ENCODE measurements at regions of chr5 and their contacts with region 1.

Region 1: GRCh38 chr5:103258368-103258956 is at the start of gene MACIR:
- DNase-seq: peak; percentile 90 to 98 (median 94)
- ATAC-seq: peak; percentile 91
- H3K4me3 ChIP-seq: peak within 1 kb of the TSS; percentile 82
- H3K4me3 Mint-ChIP-seq: peak within 1 kb of the TSS; percentile 90
- H3K27ac ChIP-seq: peak within 1 kb of the TSS in 1 of 2 donors; percentile 65
- H3K27ac Mint-ChIP-seq: peak within 1 kb of the TSS; percentile 80
- H3K4me1 ChIP-seq: peaks cover 9% of the 10 kb centered on the region
- H3K4me1 Mint-ChIP-seq: peaks cover 27% of the 10 kb centered on the region
- H3K27me3 ChIP-seq: peaks cover 5 to 7% of the 10 kb centered on the region in 2 experiments
- H3K27me3 Mint-ChIP-seq: peaks cover 4% of the 10 kb centered on the region
- CTCF ChIP-seq: no peak
- total RNA-seq, gene MACIR: 1.3 to 1.6 TPM

Region 2: GRCh38 chr5:102754767-102755431 is 503.6 kb before region 1 on chr5 and contains the start of gene PAM:
- CTCF ChIA-PET with region 1: no interaction called
- POLR2A ChIA-PET with region 1: interaction called, 10 read pairs
- intact Hi-C with region 1: loop called in 1 of 2 experiments (anchors 10 kb)
- DNase-seq: peak; percentile 42 to 85 (median 63)
- ATAC-seq: peak; percentile 70
- H3K4me3 ChIP-seq: peak within 1 kb of the TSS; percentile 96
- H3K4me3 Mint-ChIP-seq: peak within 1 kb of the TSS; percentile 96
- H3K27ac ChIP-seq: peak within 1 kb of the TSS; percentile 43 to 69
- H3K27ac Mint-ChIP-seq: peak within 1 kb of the TSS; percentile 79
- H3K4me1 ChIP-seq: peaks cover 22% of the 10 kb centered on the region
- H3K4me1 Mint-ChIP-seq: peaks cover 45% of the 10 kb centered on the region
- H3K27me3 ChIP-seq: no peaks in the 10 kb centered on the region
- H3K27me3 Mint-ChIP-seq: peaks cover 12% of the 10 kb centered on the region
- CTCF ChIP-seq: no peak
- total RNA-seq, gene PAM: 15.1 to 16.1 TPM

Region 3: GRCh38 chr5:103111468-103111867 is 147.0 kb before region 1 on chr5:
- CTCF ChIA-PET with region 1: no interaction called
- POLR2A ChIA-PET with region 1: interaction called, 16 read pairs
- intact Hi-C with region 1: no loop called
- DNase-seq: peak in 4 of 14 experiments; percentile 11 to 87 (median 54)
- ATAC-seq: peak; percentile 94
- H3K4me3 ChIP-seq: no peak overlapping the region
- H3K4me3 Mint-ChIP-seq: peak overlapping the region; percentile 74
- H3K27ac ChIP-seq: peak overlapping the region in 1 of 2 donors; percentile 47
- H3K27ac Mint-ChIP-seq: peak overlapping the region; percentile 93
- H3K4me1 ChIP-seq: peaks cover 7% of the 10 kb centered on the region
- H3K4me1 Mint-ChIP-seq: peaks cover 57% of the 10 kb centered on the region
- H3K27me3 ChIP-seq: no peaks in the 10 kb centered on the region
- H3K27me3 Mint-ChIP-seq: no peaks in the 10 kb centered on the region
- CTCF ChIP-seq: no peak

Region 4: DNA sequence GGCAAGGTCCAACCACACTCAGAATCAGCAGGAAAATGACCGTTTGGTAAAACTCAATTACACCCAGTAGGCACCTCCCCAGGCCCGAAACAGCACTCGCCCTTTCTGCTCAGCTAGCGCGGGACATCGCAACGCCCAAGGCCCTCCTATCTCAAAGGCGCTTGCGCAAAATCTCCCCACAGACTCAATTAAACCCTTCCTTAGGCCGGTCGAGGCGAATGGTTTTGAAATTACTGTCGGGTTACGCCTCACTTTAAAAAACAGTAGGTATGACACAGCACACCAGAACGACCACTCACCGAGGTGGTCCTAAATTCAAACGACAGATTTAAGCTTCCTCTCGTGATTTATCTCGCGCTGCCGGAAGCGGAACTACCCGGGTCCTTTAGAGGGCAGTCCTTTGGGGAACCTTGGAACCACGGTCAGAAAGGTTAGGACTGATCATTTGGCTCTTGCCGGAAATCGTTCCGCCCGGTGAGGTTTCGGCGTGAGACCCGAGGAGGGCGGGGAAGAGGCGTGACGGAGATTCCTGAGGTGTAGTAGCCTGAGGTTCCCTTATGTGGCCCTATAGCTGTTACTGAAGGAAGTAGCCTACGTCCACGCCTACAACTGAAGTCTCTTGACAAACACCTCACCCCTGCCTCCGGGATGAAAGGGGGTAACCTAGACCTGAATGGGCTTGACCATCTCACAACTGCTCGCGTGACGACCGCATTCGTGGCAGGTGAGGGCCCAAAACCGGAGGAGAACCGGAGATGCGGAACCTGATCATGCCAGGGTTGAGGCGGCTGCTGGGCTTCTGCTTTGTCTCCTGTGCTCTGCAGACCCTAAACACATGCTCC is 138.5 kb before region 1 on chr5 and contains the starts of genes GIN1 and PPIP5K2:
- CTCF ChIA-PET with region 1: no interaction called
- POLR2A ChIA-PET with region 1: interaction called, 46 read pairs
- intact Hi-C with region 1: loop called (anchors 2 to 5 kb)
- DNase-seq: peak; percentile 93 to 99 (median 97)
- ATAC-seq: peak; percentile 90
- H3K4me3 ChIP-seq: peak within 1 kb of the TSS; percentile 86
- H3K4me3 Mint-ChIP-seq: peak within 1 kb of the TSS; percentile 98
- H3K27ac ChIP-seq: peak within 1 kb of the TSS; percentile 92 to 98
- H3K27ac Mint-ChIP-seq: peak within 1 kb of the TSS; percentile 97
- H3K4me1 ChIP-seq: peaks cover 13% of the 10 kb centered on the region
- H3K4me1 Mint-ChIP-seq: peaks cover 65% of the 10 kb centered on the region
- H3K27me3 ChIP-seq: no peaks in the 10 kb centered on the region
- H3K27me3 Mint-ChIP-seq: no peaks in the 10 kb centered on the region
- CTCF ChIP-seq: no peak
- total RNA-seq, gene GIN1: 2.7 to 2.9 TPM
- total RNA-seq, gene PPIP5K2: 40.4 to 45.6 TPM

Region 5: GRCh38 chr5:103275851-103276250 is 17.4 kb after region 1 on chr5:
- CTCF ChIA-PET with region 1: no interaction called
- POLR2A ChIA-PET with region 1: interaction called, 12 read pairs
- intact Hi-C with region 1: no loop called
- DNase-seq: no peak
- ATAC-seq: no peak
- H3K4me3 ChIP-seq: no peak overlapping the region
- H3K4me3 Mint-ChIP-seq: no peak overlapping the region
- H3K27ac ChIP-seq: no peak overlapping the region
- H3K27ac Mint-ChIP-seq: no peak overlapping the region
- H3K4me1 ChIP-seq: no peaks in the 10 kb centered on the region
- H3K4me1 Mint-ChIP-seq: peaks cover 10% of the 10 kb centered on the region
- H3K27me3 ChIP-seq: no peaks in the 10 kb centered on the region
- H3K27me3 Mint-ChIP-seq: no peaks in the 10 kb centered on the region
- CTCF ChIP-seq: no peak

Region 6: GRCh38 chr5:103562453-103563157 is 304.1 kb after region 1 on chr5 and contains the start of gene NUDT12:
- CTCF ChIA-PET with region 1: no interaction called
- POLR2A ChIA-PET with region 1: no interaction called
- intact Hi-C with region 1: loop called in 1 of 2 experiments (anchors 10 kb)
- DNase-seq: peak in 13 of 14 experiments; percentile 4 to 64 (median 25)
- ATAC-seq: peak; percentile 70
- H3K4me3 ChIP-seq: peak within 1 kb of the TSS; percentile 62
- H3K4me3 Mint-ChIP-seq: peak within 1 kb of the TSS; percentile 96
- H3K27ac ChIP-seq: no peak within 1 kb of the TSS
- H3K27ac Mint-ChIP-seq: peak within 1 kb of the TSS; percentile 85
- H3K4me1 ChIP-seq: peaks cover 3% of the 10 kb centered on the region
- H3K4me1 Mint-ChIP-seq: peaks cover 26% of the 10 kb centered on the region
- H3K27me3 ChIP-seq: no peaks in the 10 kb centered on the region
- H3K27me3 Mint-ChIP-seq: no peaks in the 10 kb centered on the region
- CTCF ChIP-seq: no peak
- total RNA-seq, gene NUDT12: 1.0 to 1.4 TPM